Activated naive CD4-positive, alpha-beta T cell treated with anti-CD3 and anti-CD28 coated beads, Interleukin-2, amount 10 ng/mL, durations not matched to agents 7 days and 5 days (primary cell): ENCODE measurements at regions of chr20 and their contacts with region 1.

Region 1: GRCh38 chr20:49219089-49219923 is at the start of gene DDX27:
- DNase-seq: peak; percentile 98
- H3K4me3 Mint-ChIP-seq: peak within 1 kb of the TSS; percentile 83
- H3K27ac Mint-ChIP-seq: peak within 1 kb of the TSS; percentile 92
- H3K4me1 Mint-ChIP-seq: peaks cover 27% of the 10 kb centered on the region
- H3K27me3 Mint-ChIP-seq: peaks cover 15% of the 10 kb centered on the region

Region 2: DNA sequence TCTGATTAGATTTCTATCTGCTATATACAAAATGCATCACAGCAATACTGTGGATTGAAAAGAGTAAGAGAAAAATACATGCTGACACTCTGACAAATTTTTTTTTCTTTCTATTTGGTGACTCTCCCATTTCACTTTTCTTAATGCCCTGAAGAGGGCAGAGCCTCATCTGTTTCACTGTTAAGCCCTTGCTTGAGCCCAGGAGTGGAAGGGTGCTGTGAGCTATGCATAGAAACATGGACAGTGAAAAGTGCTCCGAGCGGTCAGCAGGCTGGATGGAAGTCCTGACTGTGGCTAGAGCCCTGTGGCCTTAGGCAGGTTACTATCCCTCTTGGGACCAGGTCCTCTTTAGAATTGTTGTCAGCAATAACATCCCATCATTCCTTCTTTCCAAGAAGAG is 190.6 kb before region 1 on chr20:
- CTCF ChIA-PET with region 1: interaction called, 11 read pairs
- DNase-seq: no peak
- H3K4me3 Mint-ChIP-seq: no peak overlapping the region
- H3K27ac Mint-ChIP-seq: no peak overlapping the region
- H3K4me1 Mint-ChIP-seq: no peaks in the 10 kb centered on the region
- H3K27me3 Mint-ChIP-seq: no peaks in the 10 kb centered on the region

Region 3: GRCh38 chr20:49132995-49133478 is 86.3 kb before region 1 on chr20:
- CTCF ChIA-PET with region 1: interaction called, 85 read pairs
- DNase-seq: no peak
- H3K4me3 Mint-ChIP-seq: no peak overlapping the region
- H3K27ac Mint-ChIP-seq: no peak overlapping the region
- H3K4me1 Mint-ChIP-seq: peaks cover 3% of the 10 kb centered on the region
- H3K27me3 Mint-ChIP-seq: no peaks in the 10 kb centered on the region

Region 4: DNA sequence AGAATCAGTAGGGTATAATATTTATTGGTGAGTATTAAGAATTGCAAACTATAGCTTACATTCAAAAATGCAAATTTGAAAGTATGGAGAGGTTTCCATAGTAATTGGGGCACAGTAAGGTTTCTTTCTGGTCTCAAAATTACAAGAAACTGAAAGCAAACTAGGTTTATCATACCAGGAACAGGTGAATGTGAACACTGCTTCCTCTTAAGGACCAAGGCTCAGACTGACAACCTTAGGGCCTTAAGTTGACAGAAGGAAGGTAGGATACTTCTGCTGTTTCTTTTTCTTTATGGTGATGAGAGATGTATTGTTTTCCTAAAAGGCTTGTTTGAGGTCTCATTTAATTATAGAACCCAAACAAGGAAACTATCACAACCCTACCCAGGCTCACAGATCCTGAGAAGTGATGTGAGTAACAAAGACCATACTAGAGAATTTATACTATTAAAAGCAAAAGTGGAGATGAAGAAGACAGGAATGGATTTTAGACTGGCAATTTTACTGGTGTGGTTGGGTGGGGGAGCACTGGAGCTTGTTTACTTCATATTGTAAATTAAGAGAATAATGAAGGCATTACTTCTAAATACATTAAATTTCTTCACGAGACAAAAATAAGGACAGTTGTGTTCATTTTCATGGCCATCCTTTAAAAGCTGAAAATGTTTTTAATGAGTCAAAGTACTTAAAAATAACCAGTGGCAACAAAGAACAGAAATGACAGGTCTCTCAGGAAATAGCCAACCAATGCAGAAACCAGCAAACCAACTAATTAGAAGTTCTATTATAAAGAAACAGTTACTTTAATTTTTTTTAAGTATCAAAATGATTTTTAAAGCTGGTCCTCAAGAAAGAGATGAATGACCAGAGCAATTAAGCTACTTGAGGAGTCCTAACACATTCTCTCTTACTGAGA is 52.5 kb before region 1 on chr20:
- CTCF ChIA-PET with region 1: interaction called, 25 read pairs
- DNase-seq: no peak
- H3K4me3 Mint-ChIP-seq: no peak overlapping the region
- H3K27ac Mint-ChIP-seq: peak overlapping the region; percentile 88
- H3K4me1 Mint-ChIP-seq: peaks cover 47% of the 10 kb centered on the region
- H3K27me3 Mint-ChIP-seq: no peaks in the 10 kb centered on the region

Region 5: DNA sequence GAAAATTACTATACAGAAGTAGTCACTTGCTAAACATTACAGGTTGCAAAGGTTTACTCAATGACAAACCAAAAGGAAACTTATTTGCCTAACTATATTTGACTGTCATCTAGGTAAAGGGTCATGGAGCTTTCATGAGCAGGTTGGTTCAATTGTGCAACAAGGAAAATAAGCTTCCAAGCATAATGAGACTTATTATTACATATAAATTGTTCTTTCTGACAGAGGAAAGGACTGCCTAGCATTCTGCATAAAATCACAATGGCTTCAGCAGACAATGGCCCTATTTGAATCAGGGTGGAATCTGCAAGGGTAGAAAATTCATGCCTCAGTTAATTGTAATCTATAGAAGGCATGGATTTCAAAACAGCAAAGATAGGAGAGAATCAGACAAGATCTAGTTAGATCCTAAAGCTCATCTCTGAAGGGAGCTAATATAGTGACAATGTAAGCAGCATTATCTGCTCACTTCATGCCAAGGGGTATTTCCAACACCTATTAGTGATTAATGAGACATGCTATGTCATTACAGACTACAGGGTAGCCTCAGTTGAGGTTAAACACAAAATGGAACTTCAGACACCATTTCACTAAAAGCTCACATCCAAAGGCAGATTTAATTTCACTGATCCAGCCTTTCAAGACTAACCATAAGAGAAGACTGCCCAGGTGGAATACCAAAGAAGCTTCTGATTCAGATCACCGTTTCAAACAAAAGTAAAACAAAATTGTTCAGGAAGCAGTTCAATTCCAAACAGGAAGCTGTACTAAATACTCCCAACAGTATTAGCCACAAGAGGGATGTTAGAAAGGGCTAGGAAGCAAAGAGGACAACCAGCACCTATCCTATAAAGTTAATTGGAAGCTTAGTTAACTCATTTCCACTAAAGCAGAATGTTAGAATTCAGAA is 39.7 kb before region 1 on chr20:
- CTCF ChIA-PET with region 1: interaction called, 13 read pairs
- DNase-seq: no peak
- H3K4me3 Mint-ChIP-seq: no peak overlapping the region
- H3K27ac Mint-ChIP-seq: peak overlapping the region; percentile 11
- H3K4me1 Mint-ChIP-seq: peaks cover 44% of the 10 kb centered on the region
- H3K27me3 Mint-ChIP-seq: no peaks in the 10 kb centered on the region

Region 6: GRCh38 chr20:49237531-49237930 is 18.2 kb after region 1 on chr20:
- CTCF ChIA-PET with region 1: interaction called, 12 read pairs
- DNase-seq: no peak
- H3K4me3 Mint-ChIP-seq: no peak overlapping the region
- H3K27ac Mint-ChIP-seq: no peak overlapping the region
- H3K4me1 Mint-ChIP-seq: no peaks in the 10 kb centered on the region
- H3K27me3 Mint-ChIP-seq: no peaks in the 10 kb centered on the region

Region 7: DNA sequence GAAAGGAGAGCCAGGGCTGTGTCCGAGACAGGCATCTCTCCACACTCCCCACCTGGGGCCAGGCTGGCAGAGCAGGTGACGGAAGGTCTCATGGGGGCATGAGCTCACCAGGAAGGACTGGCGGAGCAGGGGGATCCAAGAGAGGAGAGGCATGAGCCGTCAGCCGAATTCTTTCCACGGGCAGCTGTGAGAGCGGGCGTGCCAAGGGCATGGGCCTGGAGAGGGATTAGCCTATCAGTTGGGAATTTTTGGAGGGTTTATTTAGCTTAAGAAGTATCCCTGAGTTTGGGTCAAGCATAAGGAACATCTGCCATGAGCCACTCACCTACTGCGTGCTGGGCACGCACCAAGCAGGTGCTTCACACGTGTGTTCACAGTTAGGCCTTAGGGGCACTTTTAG is 118.8 kb after region 1 on chr20:
- CTCF ChIA-PET with region 1: no interaction called
- DNase-seq: no peak
- H3K4me3 Mint-ChIP-seq: no peak overlapping the region
- H3K27ac Mint-ChIP-seq: no peak overlapping the region
- H3K4me1 Mint-ChIP-seq: no peaks in the 10 kb centered on the region
- H3K27me3 Mint-ChIP-seq: peaks cover 25% of the 10 kb centered on the region